ENCODE measurements at regions of chr6 and their contacts with region 1.

Region 1: GRCh38 chr6:110039364-110039980 is 61.4 kb downstream of the GPR6 start:
- H3K4me3 Mint-ChIP-seq: peak overlapping the region; percentile 70
- H3K27ac Mint-ChIP-seq: peak overlapping the region; percentile 70
- H3K4me1 Mint-ChIP-seq: peaks cover 28% of the 10 kb centered on the region
- H3K27me3 Mint-ChIP-seq: peaks cover 7% of the 10 kb centered on the region

Region 2: GRCh38 chr6:109526905-109527628 is 512.4 kb before region 1 on chr6:
- intact Hi-C with region 1: loop called (anchors 1 kb)
- H3K4me3 Mint-ChIP-seq: no peak overlapping the region
- H3K27ac Mint-ChIP-seq: no peak overlapping the region
- H3K4me1 Mint-ChIP-seq: no peaks in the 10 kb centered on the region
- H3K27me3 Mint-ChIP-seq: no peaks in the 10 kb centered on the region

Region 3: DNA sequence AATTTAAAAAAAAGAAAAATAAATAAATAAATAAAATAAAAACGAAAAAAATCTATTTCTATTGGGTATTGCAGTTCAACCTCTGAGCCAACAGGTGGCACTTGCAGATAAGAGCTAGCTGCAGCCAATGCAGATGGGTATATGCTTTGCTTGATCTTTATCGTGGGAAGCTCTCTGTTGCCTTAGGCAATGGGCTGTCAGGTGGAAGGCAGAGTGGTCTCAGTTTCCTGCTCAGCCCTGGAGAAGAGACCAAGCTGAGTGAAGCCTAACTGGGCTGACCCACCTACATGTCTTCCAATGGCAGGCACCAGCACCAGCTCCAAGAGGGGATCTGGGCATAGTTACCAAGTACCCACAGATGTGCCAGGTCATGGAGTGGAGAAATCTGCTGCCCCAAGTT is 443.5 kb before region 1 on chr6:
- intact Hi-C with region 1: loop called (anchors 1 kb)
- H3K4me3 Mint-ChIP-seq: no peak overlapping the region
- H3K27ac Mint-ChIP-seq: no peak overlapping the region
- H3K4me1 Mint-ChIP-seq: no peaks in the 10 kb centered on the region
- H3K27me3 Mint-ChIP-seq: no peaks in the 10 kb centered on the region

Region 4: DNA sequence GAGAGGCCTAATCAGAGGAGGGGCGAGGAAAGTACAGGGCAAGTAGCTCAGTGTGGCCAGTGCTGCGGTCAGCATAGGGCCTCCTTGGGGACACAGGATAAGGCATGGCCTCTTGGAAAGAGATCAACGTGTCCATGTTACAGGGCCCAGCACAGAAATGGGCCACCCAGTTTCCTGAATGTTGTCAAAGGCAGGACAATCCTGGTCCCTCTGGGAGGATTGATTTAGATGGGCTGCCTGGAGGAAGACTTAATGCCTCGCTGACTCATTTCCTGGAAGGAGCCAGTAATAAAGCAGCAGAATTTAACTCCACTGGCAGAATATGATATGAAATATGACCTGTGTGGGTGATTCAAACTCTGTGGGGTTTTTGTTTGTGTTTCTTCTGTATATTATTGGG is 359.3 kb after region 1 on chr6:
- intact Hi-C with region 1: loop called (anchors 10 kb)
- H3K4me3 Mint-ChIP-seq: no peak overlapping the region
- H3K27ac Mint-ChIP-seq: no peak overlapping the region
- H3K4me1 Mint-ChIP-seq: peaks cover 15% of the 10 kb centered on the region
- H3K27me3 Mint-ChIP-seq: no peaks in the 10 kb centered on the region

Region 5: DNA sequence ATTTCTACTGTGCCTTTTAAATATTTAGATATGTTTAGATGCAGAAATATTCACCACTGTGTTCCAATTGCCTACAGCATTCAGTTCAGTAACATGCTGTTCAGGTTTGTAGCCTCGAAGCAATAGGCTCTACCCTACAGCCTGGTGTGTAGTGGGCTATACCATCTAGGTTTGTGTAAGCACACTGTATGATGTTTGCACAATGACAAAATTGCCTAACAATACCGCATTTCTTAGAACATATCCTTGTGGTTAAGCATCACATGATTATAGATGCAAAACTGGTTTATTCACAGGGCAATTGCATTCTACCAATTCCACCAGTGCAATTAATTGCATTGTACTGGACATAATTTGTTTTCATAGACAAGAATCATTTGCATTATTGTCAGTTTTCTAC is 444.8 kb after region 1 on chr6:
- intact Hi-C with region 1: no loop called
- H3K4me3 Mint-ChIP-seq: no peak overlapping the region
- H3K27ac Mint-ChIP-seq: no peak overlapping the region
- H3K4me1 Mint-ChIP-seq: peaks cover 23% of the 10 kb centered on the region
- H3K27me3 Mint-ChIP-seq: no peaks in the 10 kb centered on the region